ENCODE measurements at regions of chrX and their contacts with region 1.

Region 1: GRCh38 chrX:136623396-136623795 is 24.6 kb upstream of the CD40LG start:
- DNase-seq: peak; percentile 89
- ATAC-seq: peak; percentile 37
- H3K4me3 Mint-ChIP-seq: no peak overlapping the region
- H3K27ac Mint-ChIP-seq: peak overlapping the region; percentile 89
- H3K4me1 Mint-ChIP-seq: peaks cover 95% of the 10 kb centered on the region
- H3K27me3 Mint-ChIP-seq: no peaks in the 10 kb centered on the region

Region 2: DNA sequence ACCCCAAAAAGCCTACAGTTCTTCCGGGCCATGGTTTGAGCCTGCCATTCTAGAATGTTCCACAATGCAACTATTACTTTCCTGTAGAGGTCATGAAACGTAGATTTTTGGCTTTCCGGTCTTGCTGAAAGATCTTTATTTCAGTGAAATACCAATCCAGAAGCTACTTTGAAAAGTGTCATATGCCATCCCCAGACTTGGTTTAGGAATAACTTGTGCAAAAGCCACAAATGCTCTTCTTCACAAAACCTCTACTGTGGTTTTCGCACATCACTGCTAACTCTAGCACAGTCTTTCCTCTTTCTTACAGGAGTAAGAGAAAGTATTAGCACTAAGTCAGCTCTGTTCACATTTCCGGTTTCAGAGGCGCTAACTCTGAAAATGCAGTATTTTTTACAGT is 11.8 kb after region 1 on chrX:
- CTCF ChIA-PET with region 1: interaction called, 11 read pairs
- DNase-seq: peak; percentile 60
- ATAC-seq: peak; percentile 76
- H3K4me3 Mint-ChIP-seq: peak overlapping the region; percentile 51
- H3K27ac Mint-ChIP-seq: peak overlapping the region; percentile 89
- H3K4me1 Mint-ChIP-seq: peaks cover 86% of the 10 kb centered on the region
- H3K27me3 Mint-ChIP-seq: no peaks in the 10 kb centered on the region

Region 3: GRCh38 chrX:136725446-136726104 is 102.2 kb after region 1 on chrX:
- CTCF ChIA-PET with region 1: no interaction called
- DNase-seq: no peak
- ATAC-seq: no peak
- H3K4me3 Mint-ChIP-seq: no peak overlapping the region
- H3K27ac Mint-ChIP-seq: peak overlapping the region; percentile 49
- H3K4me1 Mint-ChIP-seq: peaks cover 24% of the 10 kb centered on the region
- H3K27me3 Mint-ChIP-seq: no peaks in the 10 kb centered on the region